CD4-positive, alpha-beta memory T cell (primary cell): ENCODE measurements at regions of chr17 and their contacts with region 1.

Region 1: DNA sequence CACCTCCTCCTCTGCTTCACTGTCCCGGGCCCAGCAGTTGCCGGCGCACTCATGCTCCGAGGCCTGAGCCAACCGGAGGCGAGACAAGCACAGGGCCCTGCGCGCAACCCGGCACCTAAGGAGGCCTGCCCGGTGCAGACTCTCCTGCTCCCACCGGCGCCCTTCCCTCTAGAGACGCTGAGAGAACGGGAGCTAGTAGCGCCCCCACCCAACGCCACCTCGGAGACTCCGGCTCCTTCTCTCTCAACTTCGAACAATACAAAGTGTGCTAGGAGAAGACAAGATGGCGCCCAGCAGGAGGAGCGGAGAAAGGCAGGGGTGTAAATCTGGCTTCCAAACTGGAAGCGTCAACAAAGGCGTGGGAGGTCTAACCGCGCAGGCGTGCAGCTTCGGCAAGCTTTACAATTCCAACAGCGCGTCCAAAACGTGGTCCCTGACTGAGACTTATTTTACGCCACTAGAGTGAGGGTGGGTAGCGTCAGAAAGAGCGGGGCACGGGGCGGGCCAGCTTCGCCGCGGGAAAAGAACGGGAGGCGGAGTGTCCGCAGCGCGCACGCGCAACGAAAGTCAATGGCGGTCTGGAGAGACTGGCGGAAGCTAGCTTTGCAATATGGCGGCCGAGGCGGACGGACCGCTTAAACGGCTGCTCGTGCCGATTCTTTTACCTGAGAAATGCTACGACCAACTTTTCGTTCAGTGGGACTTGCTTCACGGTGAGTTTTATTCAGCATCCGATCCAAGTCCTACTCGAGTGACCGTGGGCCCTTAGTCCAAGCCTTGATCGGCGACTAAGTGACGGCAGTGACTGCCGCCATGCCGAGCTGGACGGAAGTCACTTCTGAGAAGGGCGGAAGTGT is at the start of gene MPDU1:
- DNase-seq: peak; percentile 95 to 97 (median 97)
- H3K4me3 ChIP-seq: peak within 1 kb of the TSS; percentile 91 to 92
- H3K4me3 Mint-ChIP-seq: peak within 1 kb of the TSS; percentile 99 to 100 (median 100)
- H3K27ac ChIP-seq: peak within 1 kb of the TSS; percentile 97
- H3K27ac Mint-ChIP-seq: peak within 1 kb of the TSS; percentile 99 to 100 (median 100)
- H3K4me1 ChIP-seq: peaks cover 50% of the 10 kb centered on the region
- H3K4me1 Mint-ChIP-seq: peaks cover 20 to 65% (median 43%) of the 10 kb centered on the region in 4 donors
- H3K27me3 ChIP-seq: no peaks in the 10 kb centered on the region
- H3K27me3 Mint-ChIP-seq: no peaks in the 10 kb centered on the region
- total RNA-seq, gene MPDU1: 23.8 to 25.0 TPM

Region 2: GRCh38 chr17:7383742-7384488 is 199.6 kb before region 1 on chr17:
- CTCF ChIA-PET with region 1: interaction called, 4 read pairs
- POLR2A ChIA-PET with region 1: interaction called, 11 read pairs
- intact Hi-C with region 1: no loop called
- DNase-seq: peak; percentile 82 to 87 (median 84)
- H3K4me3 ChIP-seq: peak overlapping the region; percentile 42 to 86
- H3K4me3 Mint-ChIP-seq: peak overlapping the region; percentile 80 to 87 (median 82)
- H3K27ac ChIP-seq: peak overlapping the region; percentile 72
- H3K27ac Mint-ChIP-seq: peak overlapping the region; percentile 88 to 97 (median 94)
- H3K4me1 ChIP-seq: peaks cover 16% of the 10 kb centered on the region
- H3K4me1 Mint-ChIP-seq: peaks cover 8 to 28% (median 13%) of the 10 kb centered on the region in 4 donors
- H3K27me3 ChIP-seq: peaks cover 9% of the 10 kb centered on the region
- H3K27me3 Mint-ChIP-seq: peaks cover 28 to 32% of the 10 kb centered on the region in 2 donors

Region 3: GRCh38 chr17:7548585-7549400 is 34.7 kb before region 1 on chr17 and contains the start of gene TNFSF12:
- CTCF ChIA-PET with region 1: interaction called, 5 read pairs
- POLR2A ChIA-PET with region 1: interaction called, 13 read pairs
- intact Hi-C with region 1: no loop called
- DNase-seq: peak; percentile 38 to 64 (median 42)
- H3K4me3 ChIP-seq: peak within 1 kb of the TSS; percentile 72 to 82
- H3K4me3 Mint-ChIP-seq: peak within 1 kb of the TSS; percentile 88 to 96 (median 92)
- H3K27ac ChIP-seq: peak within 1 kb of the TSS; percentile 79
- H3K27ac Mint-ChIP-seq: peak within 1 kb of the TSS; percentile 81 to 96 (median 94)
- H3K4me1 ChIP-seq: peaks cover 37% of the 10 kb centered on the region
- H3K4me1 Mint-ChIP-seq: peaks cover 30 to 52% (median 43%) of the 10 kb centered on the region in 4 donors
- H3K27me3 ChIP-seq: no peaks in the 10 kb centered on the region
- H3K27me3 Mint-ChIP-seq: no peaks in the 10 kb centered on the region
- total RNA-seq, gene TNFSF12: 45.1 to 52.2 TPM

Region 4: DNA sequence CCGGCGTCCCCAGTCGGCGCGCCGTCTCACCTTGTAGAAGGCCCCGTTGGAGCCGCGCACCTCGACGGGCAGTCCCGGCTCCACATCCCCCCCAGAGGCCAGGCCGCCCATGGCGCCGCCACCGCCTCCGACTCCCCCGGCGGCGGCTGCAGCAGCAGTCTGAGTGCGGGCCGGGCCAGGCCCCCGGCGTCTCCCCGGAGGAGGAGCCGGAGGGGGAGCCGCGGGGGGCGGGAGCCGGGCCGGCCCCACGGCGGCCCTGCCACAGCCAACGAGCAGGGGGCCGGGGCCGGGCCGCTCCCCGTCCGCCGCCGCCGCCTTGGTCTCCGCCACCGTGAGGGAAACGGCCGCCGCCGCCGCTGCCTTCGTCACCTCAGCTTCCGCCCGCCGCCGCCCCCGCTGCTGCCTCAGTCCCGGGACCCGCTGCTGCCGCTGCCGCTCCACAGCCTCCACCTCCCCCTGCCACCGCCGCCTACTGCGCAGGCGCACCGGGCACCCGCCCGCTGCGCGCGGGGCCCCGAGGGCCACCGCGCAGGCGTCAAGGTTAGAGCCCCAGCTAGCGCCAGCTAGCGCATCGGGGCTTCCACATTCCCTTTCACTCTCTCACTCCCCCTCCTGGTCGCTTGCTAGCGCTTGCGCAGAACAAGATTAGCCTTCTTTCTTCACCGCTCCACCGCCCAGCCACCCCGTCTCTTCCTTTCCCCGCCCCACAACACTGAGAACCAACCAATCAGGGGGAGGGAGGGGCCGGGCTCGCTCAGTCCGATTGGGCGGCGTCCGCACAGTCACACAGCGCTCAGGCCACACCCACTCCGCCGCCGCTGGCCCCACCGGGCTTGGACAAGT is 31.2 kb after region 1 on chr17 and contains the start of gene FXR2:
- CTCF ChIA-PET with region 1: interaction called, 10 read pairs
- POLR2A ChIA-PET with region 1: interaction called, 24 read pairs
- intact Hi-C with region 1: loop called (anchors 1 kb)
- DNase-seq: peak; percentile 98 to 100 (median 99)
- H3K4me3 ChIP-seq: peak within 1 kb of the TSS; percentile 74 to 78
- H3K4me3 Mint-ChIP-seq: peak within 1 kb of the TSS; percentile 87 to 95 (median 93)
- H3K27ac ChIP-seq: peak within 1 kb of the TSS; percentile 66
- H3K27ac Mint-ChIP-seq: peak within 1 kb of the TSS; percentile 83 to 98 (median 97)
- H3K4me1 ChIP-seq: peaks cover 42% of the 10 kb centered on the region
- H3K4me1 Mint-ChIP-seq: peaks cover 22 to 49% (median 36%) of the 10 kb centered on the region in 4 donors
- H3K27me3 ChIP-seq: no peaks in the 10 kb centered on the region
- H3K27me3 Mint-ChIP-seq: no peaks in the 10 kb centered on the region
- total RNA-seq, gene FXR2: 44.1 to 46.6 TPM

Region 5: DNA sequence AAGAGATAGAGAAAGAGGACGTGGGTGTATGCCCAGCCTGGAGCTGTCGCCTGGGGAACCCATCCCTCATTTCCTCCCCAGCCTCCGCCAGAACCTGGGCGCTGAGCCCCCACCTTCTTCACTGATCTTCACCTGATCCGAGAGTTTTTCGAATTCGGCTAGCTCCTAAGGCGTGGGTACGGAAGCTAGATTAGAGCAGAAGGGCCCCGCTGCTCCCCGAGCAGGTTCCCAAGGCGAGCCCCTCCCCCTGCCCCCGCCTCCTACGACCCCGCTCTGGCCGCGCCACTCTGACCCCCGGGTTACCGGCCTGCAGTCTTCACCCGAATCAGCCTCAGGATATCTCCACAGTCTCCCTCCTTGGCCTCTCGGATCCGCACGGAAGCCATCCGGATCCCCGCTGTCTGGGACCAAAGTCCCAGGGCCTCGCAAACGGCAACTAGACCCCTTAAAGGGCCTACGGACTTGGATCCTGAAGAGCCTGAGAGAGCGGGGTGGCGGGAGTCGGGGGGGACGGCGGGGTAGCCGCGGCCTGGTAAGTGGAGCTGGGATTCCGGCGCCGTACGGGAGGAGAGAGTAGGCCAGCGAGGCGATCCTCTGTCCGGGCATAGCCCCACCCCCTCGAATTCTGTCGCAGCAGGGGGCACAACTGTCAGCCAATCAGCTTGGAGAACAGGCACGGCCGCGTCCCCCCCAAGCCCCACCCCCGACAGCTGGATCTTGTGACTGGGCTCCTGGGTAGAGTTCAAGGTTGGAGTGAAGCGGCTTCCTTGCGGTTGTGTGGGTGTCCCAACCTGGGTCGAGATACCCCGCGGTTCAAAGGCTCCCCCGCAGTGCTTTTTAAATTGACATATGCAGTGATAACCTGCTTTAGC is 44.0 kb after region 1 on chr17 and contains the start of gene SAT2:
- CTCF ChIA-PET with region 1: no interaction called
- POLR2A ChIA-PET with region 1: interaction called, 24 read pairs
- intact Hi-C with region 1: no loop called
- DNase-seq: peak; percentile 73 to 88 (median 75)
- H3K4me3 ChIP-seq: peak within 1 kb of the TSS; percentile 76 to 82
- H3K4me3 Mint-ChIP-seq: peak within 1 kb of the TSS; percentile 91 to 95 (median 93)
- H3K27ac ChIP-seq: peak within 1 kb of the TSS; percentile 82
- H3K27ac Mint-ChIP-seq: peak within 1 kb of the TSS; percentile 75 to 96 (median 91)
- H3K4me1 ChIP-seq: peaks cover 13% of the 10 kb centered on the region
- H3K4me1 Mint-ChIP-seq: peaks cover 4 to 20% (median 14%) of the 10 kb centered on the region in 4 donors
- H3K27me3 ChIP-seq: no peaks in the 10 kb centered on the region
- H3K27me3 Mint-ChIP-seq: no peaks in the 10 kb centered on the region
- total RNA-seq, gene SAT2: 65.8 to 76.9 TPM

Region 6: GRCh38 chr17:7644775-7645174 is 61.3 kb after region 1 on chr17:
- CTCF ChIA-PET with region 1: no interaction called
- POLR2A ChIA-PET with region 1: no interaction called
- intact Hi-C with region 1: no loop called
- DNase-seq: no peak
- H3K4me3 ChIP-seq: no peak overlapping the region
- H3K4me3 Mint-ChIP-seq: no peak overlapping the region
- H3K27ac ChIP-seq: no peak overlapping the region
- H3K27ac Mint-ChIP-seq: peak overlapping the region in 1 of 7 donors; percentile 66
- H3K4me1 ChIP-seq: peaks cover under 1% of the 10 kb centered on the region
- H3K4me1 Mint-ChIP-seq: peaks cover 6 to 14% (median 10%) of the 10 kb centered on the region in 4 donors
- H3K27me3 ChIP-seq: no peaks in the 10 kb centered on the region
- H3K27me3 Mint-ChIP-seq: peaks cover 9 to 11% of the 10 kb centered on the region in 2 donors

Region 7: DNA sequence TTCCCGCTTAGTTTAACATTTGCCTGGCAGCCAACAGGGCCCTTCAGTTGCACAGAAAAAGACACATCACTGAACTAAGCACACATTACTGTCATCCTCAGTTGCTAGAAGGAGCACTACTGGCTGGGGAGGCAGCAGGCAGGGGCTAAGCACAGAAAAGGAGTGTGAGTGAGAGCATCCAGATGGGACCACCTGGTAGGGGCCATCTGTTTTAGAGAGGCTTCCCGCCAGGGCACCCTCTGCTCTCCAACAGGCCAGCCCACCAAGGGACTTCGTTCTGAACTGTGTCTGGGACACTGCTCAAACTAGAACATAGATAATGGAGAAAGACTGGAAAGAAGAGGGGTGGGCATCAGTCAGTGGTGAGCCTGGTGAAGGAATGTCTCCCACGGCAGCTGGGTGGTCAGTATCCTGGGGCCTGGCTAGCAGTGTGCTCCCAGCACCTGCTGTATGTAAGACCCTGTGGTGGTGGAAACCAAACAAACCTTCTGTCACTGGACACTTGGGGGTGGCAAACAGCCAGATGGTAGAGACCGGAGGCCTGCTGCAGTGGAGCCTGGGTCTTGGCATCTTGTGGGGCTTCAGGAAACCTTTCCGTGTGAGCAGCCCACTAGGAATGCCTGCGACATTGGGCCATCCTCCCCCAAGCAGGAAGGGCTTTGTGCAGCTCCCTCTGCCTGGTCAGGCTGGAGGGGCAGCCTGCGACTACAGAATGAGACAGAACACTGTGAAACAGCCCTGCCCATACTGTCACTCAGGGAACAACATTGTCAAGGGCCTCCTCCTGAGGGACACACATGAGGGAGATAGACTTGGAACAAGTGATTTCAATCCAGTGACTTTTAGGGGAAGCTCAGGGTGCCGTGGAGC is 692.2 kb after region 1 on chr17:
- CTCF ChIA-PET with region 1: no interaction called
- POLR2A ChIA-PET with region 1: no interaction called
- intact Hi-C with region 1: no loop called
- DNase-seq: no peak
- H3K4me3 ChIP-seq: no peak overlapping the region
- H3K4me3 Mint-ChIP-seq: no peak overlapping the region
- H3K27ac ChIP-seq: no peak overlapping the region
- H3K27ac Mint-ChIP-seq: peak overlapping the region in 1 of 7 donors; percentile 53
- H3K4me1 ChIP-seq: no peaks in the 10 kb centered on the region
- H3K4me1 Mint-ChIP-seq: no peaks in the 10 kb centered on the region
- H3K27me3 ChIP-seq: no peaks in the 10 kb centered on the region
- H3K27me3 Mint-ChIP-seq: no peaks in the 10 kb centered on the region